HepG2 (cell line): ENCODE measurements at regions of chr7 and their contacts with region 1.

Region 1: DNA sequence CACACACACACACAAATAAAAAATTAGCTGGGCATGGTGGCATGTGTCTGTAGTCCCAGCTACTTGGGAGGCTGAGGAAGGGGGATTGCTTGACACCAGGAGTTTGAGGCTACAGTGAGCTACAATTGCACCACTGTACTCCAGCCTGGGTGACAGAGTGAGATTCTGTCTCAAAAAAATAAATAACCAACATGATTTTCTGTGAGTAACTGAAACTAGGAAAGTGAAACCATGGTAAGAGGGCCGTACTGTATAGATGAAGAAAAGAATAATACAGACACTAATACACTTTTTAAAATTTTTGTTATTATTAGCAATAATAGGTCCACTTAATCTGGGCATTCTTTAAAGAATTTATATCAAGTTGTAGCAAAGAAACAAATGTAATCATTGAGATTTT is 170.9 kb downstream of the HGF start:
- DNase-seq: no peak
- ATAC-seq: no peak
- H3K4me3 ChIP-seq: no peak overlapping the region
- H3K27ac ChIP-seq: no peak overlapping the region
- H3K4me1 ChIP-seq: no peaks in the 10 kb centered on the region
- H3K27me3 ChIP-seq: no peaks in the 10 kb centered on the region
- CTCF ChIP-seq: no peak
- EP300 ChIP-seq: no peak
- POLR2A ChIP-seq: no peak
- RAD21 ChIP-seq: no peak

Region 2: GRCh38 chr7:81618396-81619014 is 19.6 kb after region 1 on chr7:
- CTCF ChIA-PET with region 1: no interaction called
- POLR2A ChIA-PET with region 1: no interaction called
- in situ Hi-C with region 1: no loop called
- intact Hi-C with region 1: loop called (anchors 2 kb)
- DNase-seq: peak; percentile 11
- ATAC-seq: no peak
- H3K4me3 ChIP-seq: no peak overlapping the region
- H3K27ac ChIP-seq: no peak overlapping the region
- H3K4me1 ChIP-seq: peaks cover 3% of the 10 kb centered on the region
- H3K27me3 ChIP-seq: no peaks in the 10 kb centered on the region
- CTCF ChIP-seq: no peak
- EP300 ChIP-seq: no peak
- POLR2A ChIP-seq: no peak
- RAD21 ChIP-seq: no peak

Region 3: DNA sequence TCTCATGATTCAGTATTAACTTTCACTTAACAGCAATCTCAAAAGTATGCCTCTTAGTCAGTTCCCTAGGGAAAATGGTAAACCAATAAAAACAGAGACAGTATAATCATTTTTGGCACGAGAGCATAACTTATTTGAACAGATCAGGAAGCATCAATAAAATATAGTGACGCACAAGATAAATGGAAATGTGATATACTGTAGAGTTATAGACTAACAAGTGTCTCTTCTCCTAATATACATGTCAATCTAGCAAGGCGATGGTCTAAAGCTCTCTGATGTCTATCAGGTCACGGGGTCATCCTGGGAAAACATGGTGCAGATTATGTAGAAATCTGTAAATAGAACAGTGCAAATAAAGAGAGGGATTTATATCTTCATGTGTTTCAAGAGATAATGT is 39.3 kb after region 1 on chr7:
- CTCF ChIA-PET with region 1: no interaction called
- POLR2A ChIA-PET with region 1: no interaction called
- in situ Hi-C with region 1: no loop called
- intact Hi-C with region 1: no loop called
- DNase-seq: peak; percentile 29
- ATAC-seq: no peak
- H3K4me3 ChIP-seq: no peak overlapping the region
- H3K27ac ChIP-seq: no peak overlapping the region
- H3K4me1 ChIP-seq: no peaks in the 10 kb centered on the region
- H3K27me3 ChIP-seq: no peaks in the 10 kb centered on the region
- CTCF ChIP-seq: no peak
- EP300 ChIP-seq: no peak
- POLR2A ChIP-seq: no peak
- RAD21 ChIP-seq: no peak